AG04450 (cell line): ENCODE measurements at regions of chr12 and their contacts with region 1.

Region 1: GRCh38 chr12:48015129-48015528 is 10.9 kb upstream of the COL2A1 start:
- DNase-seq: no peak
- H3K4me3 ChIP-seq: no peak overlapping the region
- H3K27ac ChIP-seq: no peak overlapping the region
- H3K27me3 ChIP-seq: peaks cover 47% of the 10 kb centered on the region
- CTCF ChIP-seq: no peak

Region 2: GRCh38 chr12:47995981-47996401 is 19.1 kb before region 1 on chr12:
- CTCF ChIA-PET with region 1: interaction called, 10 read pairs
- POLR2A ChIA-PET with region 1: no interaction called
- DNase-seq: peak; percentile 48
- H3K4me3 ChIP-seq: no peak overlapping the region
- H3K27ac ChIP-seq: no peak overlapping the region
- H3K27me3 ChIP-seq: peaks cover 86% of the 10 kb centered on the region
- CTCF ChIP-seq: no peak